Activated CD4-positive, alpha-beta T cell treated with anti-CD3 and anti-CD28 coated beads for 36 hours (primary cell): ENCODE measurements at regions of chr1 and their contacts with region 1.

Region 1: GRCh38 chr1:207047505-207047904 is 3.5 kb downstream of the YOD1 start:
- DNase-seq: no peak
- ATAC-seq: no peak
- H3K4me3 Mint-ChIP-seq: no peak overlapping the region
- H3K27ac Mint-ChIP-seq: no peak overlapping the region
- H3K4me1 Mint-ChIP-seq: peaks cover 63% of the 10 kb centered on the region
- H3K27me3 Mint-ChIP-seq: no peaks in the 10 kb centered on the region

Region 2: GRCh38 chr1:207029701-207030521 is 17.6 kb before region 1 on chr1:
- CTCF ChIA-PET with region 1: interaction called, 10 read pairs
- POLR2A ChIA-PET with region 1: no interaction called
- intact Hi-C with region 1: no loop called
- DNase-seq: no peak
- ATAC-seq: no peak
- H3K4me3 Mint-ChIP-seq: no peak overlapping the region
- H3K27ac Mint-ChIP-seq: no peak overlapping the region
- H3K4me1 Mint-ChIP-seq: no peaks in the 10 kb centered on the region
- H3K27me3 Mint-ChIP-seq: peaks cover 23% of the 10 kb centered on the region

Region 3: DNA sequence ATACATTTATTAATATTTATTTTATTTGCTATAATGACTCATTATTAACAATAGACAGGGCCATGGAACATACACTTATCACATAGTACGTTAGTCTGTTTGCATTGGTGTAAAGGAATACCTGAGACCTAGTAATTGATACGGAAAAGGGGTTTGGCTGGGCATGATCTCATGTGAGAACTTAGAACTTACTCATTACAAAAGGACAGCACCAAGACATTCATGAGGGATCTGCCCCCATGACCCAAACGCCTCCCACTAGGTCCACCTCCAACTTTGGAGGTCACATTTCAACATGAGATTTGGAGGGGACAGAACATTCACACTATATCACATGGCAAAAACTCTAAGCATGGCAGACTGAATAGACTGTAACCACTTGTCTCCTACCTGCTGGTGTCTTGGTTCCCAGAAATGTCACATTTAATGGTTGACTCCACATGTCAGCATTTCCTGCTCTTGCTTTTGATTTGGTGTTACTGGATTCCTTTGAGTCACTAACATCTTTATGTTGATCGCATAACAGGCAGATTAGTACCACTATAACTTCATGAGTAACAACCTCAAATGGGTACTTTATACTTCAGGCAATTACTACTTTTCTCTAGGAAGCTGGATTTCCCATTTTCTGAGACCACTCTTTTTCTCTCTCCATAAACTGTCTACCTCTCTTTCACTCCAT is 11.5 kb before region 1 on chr1:
- CTCF ChIA-PET with region 1: interaction called, 11 read pairs
- POLR2A ChIA-PET with region 1: no interaction called
- intact Hi-C with region 1: no loop called
- DNase-seq: no peak
- ATAC-seq: peak; percentile 78
- H3K4me3 Mint-ChIP-seq: no peak overlapping the region
- H3K27ac Mint-ChIP-seq: no peak overlapping the region
- H3K4me1 Mint-ChIP-seq: no peaks in the 10 kb centered on the region
- H3K27me3 Mint-ChIP-seq: peaks cover 12% of the 10 kb centered on the region